Activated B cell treated with CpG ODN at 0.5 μM for 24 hours (primary cell): ENCODE measurements at regions of chr17 and their contacts with region 1.

Region 1: GRCh38 chr17:77068915-77069314 is 71.9 kb upstream of the SEC14L1 start:
- DNase-seq: no peak
- ATAC-seq: no peak
- H3K4me3 Mint-ChIP-seq: no peak overlapping the region
- H3K27ac Mint-ChIP-seq: no peak overlapping the region
- H3K4me1 Mint-ChIP-seq: peaks cover 2% of the 10 kb centered on the region
- H3K27me3 Mint-ChIP-seq: peaks cover 32% of the 10 kb centered on the region
- CTCF ChIP-seq: no peak

Region 2: GRCh38 chr17:76816590-76817135 is 252.3 kb before region 1 on chr17:
- CTCF ChIA-PET with region 1: interaction called, 4 read pairs
- POLR2A ChIA-PET with region 1: no interaction called
- intact Hi-C with region 1: loop called (anchors 1 kb)
- DNase-seq: no peak
- ATAC-seq: peak; percentile 57
- H3K4me3 Mint-ChIP-seq: no peak overlapping the region
- H3K27ac Mint-ChIP-seq: no peak overlapping the region
- H3K4me1 Mint-ChIP-seq: peaks cover 7% of the 10 kb centered on the region
- H3K27me3 Mint-ChIP-seq: peaks cover 11% of the 10 kb centered on the region
- CTCF ChIP-seq: no peak

Region 3: GRCh38 chr17:77011173-77012011 is 57.5 kb before region 1 on chr17:
- CTCF ChIA-PET with region 1: interaction called, 3 read pairs
- POLR2A ChIA-PET with region 1: no interaction called
- intact Hi-C with region 1: loop called (anchors 2 kb)
- DNase-seq: no peak
- ATAC-seq: no peak
- H3K4me3 Mint-ChIP-seq: no peak overlapping the region
- H3K27ac Mint-ChIP-seq: no peak overlapping the region
- H3K4me1 Mint-ChIP-seq: peaks cover 5% of the 10 kb centered on the region
- H3K27me3 Mint-ChIP-seq: peaks cover 8% of the 10 kb centered on the region
- CTCF ChIP-seq: no peak